Mammary epithelial cell (primary cell): ENCODE measurements at regions of chr9 and their contacts with region 1.

Region 1: GRCh38 chr9:116795821-116796220 is 108.7 kb downstream of the TRIM32 start:
- DNase-seq: no peak
- H3K4me3 ChIP-seq: no peak overlapping the region
- H3K27ac ChIP-seq: no peak overlapping the region
- H3K4me1 ChIP-seq: no peaks in the 10 kb centered on the region
- H3K27me3 ChIP-seq: no peaks in the 10 kb centered on the region
- CTCF ChIP-seq: no peak

Region 2: GRCh38 chr9:116713271-116713670 is 82.5 kb before region 1 on chr9:
- CTCF ChIA-PET with region 1: no interaction called
- dilution Hi-C with region 1: loop called (anchors 5 kb)
- in situ Hi-C with region 1: no loop called
- intact Hi-C with region 1: no loop called
- DNase-seq: no peak
- H3K4me3 ChIP-seq: no peak overlapping the region
- H3K27ac ChIP-seq: no peak overlapping the region
- H3K4me1 ChIP-seq: no peaks in the 10 kb centered on the region
- H3K27me3 ChIP-seq: no peaks in the 10 kb centered on the region
- CTCF ChIP-seq: no peak